Panc1 (cell line): ENCODE measurements at regions of chr22 and their contacts with region 1.

Region 1: DNA sequence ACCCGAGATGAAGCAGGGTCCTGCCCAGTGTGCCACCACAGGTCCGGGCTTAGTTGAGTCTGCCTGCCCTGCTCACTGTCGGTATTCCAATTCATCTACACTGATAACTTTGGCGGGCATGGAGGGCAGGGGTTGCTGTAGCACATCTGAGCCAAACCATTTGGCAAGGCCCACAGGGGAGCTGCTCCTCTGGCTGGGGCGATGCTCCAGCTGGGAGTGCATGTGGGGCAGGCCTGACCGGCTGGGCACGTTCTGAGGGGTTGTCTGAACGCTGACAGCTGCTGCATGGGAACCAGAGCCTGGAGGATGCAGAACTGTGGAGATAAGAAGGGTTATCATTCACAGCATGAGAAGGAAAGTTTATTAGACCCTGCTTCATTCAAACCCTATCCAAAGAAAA is 40.4 kb downstream of the DRG1 start:
- DNase-seq: no peak
- ATAC-seq: no peak
- H3K4me3 ChIP-seq: no peak overlapping the region
- H3K27ac ChIP-seq: no peak overlapping the region
- H3K4me1 ChIP-seq: no peaks in the 10 kb centered on the region
- H3K27me3 ChIP-seq: no peaks in the 10 kb centered on the region
- CTCF ChIP-seq: no peak

Region 2: GRCh38 chr22:31363885-31364465 is 75.8 kb before region 1 on chr22:
- CTCF ChIA-PET with region 1: no interaction called
- POLR2A ChIA-PET with region 1: no interaction called
- in situ Hi-C with region 1: no loop called
- intact Hi-C with region 1: no loop called
- DNase-seq: no peak
- ATAC-seq: no peak
- H3K4me3 ChIP-seq: no peak overlapping the region
- H3K27ac ChIP-seq: no peak overlapping the region
- H3K4me1 ChIP-seq: no peaks in the 10 kb centered on the region
- H3K27me3 ChIP-seq: no peaks in the 10 kb centered on the region
- CTCF ChIP-seq: no peak

Region 3: DNA sequence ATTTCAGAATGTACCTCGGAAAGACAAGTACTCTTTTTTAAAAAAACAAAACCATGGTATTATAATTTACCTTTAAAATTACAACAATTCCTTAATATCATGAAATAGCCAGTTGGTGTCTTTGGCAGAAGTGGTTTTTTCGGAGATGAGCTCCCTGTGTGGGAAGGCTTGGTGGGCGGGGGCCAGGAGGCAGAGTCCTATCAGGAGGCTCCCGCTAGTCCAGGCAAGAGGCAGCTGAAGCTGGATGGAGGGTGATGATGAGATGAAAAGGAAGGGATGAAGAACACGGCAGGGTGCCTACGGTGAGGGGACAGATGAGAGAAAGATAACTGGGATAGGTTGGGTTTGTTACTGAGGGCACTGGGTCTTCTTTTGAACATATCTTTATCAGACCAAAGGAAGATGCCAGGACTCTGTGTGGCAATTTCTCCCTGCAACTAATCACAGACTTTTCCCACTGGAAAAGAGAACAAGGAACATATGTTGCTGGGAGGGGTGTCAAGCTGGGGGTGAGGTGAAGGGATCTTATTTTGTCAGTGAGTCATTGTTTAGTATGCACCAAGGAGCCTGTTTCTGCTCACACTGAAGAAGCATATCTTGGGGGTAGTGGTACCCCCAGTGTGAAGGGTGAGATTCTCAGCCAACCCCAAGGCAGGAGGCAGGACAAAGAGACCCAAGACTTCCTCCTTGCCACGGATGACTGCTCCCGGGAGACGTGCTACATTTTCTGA is 413.0 kb after region 1 on chr22:
- CTCF ChIA-PET with region 1: no interaction called
- POLR2A ChIA-PET with region 1: interaction called, 16 read pairs
- in situ Hi-C with region 1: no loop called
- intact Hi-C with region 1: no loop called
- DNase-seq: no peak
- ATAC-seq: no peak
- H3K4me3 ChIP-seq: no peak overlapping the region
- H3K27ac ChIP-seq: no peak overlapping the region
- H3K4me1 ChIP-seq: no peaks in the 10 kb centered on the region
- H3K27me3 ChIP-seq: no peaks in the 10 kb centered on the region
- CTCF ChIP-seq: no peak